ENCODE measurements at regions of chr13 and their contacts with region 1.

Region 1: GRCh38 chr13:91313103-91313502 is 34.4 kb upstream of the MIR17HG start:
- DNase-seq: no peak
- ATAC-seq: no peak
- H3K4me3 ChIP-seq: no peak overlapping the region
- H3K27ac ChIP-seq: no peak overlapping the region
- H3K4me1 ChIP-seq: no peaks in the 10 kb centered on the region
- H3K27me3 ChIP-seq: peaks cover 0 to 47% (median 20%) of the 10 kb centered on the region in 9 donors
- CTCF ChIP-seq: peak in 11 of 12 donors; percentile 19 to 52 (median 41)
- POLR2A ChIP-seq: no peak

Region 2: DNA sequence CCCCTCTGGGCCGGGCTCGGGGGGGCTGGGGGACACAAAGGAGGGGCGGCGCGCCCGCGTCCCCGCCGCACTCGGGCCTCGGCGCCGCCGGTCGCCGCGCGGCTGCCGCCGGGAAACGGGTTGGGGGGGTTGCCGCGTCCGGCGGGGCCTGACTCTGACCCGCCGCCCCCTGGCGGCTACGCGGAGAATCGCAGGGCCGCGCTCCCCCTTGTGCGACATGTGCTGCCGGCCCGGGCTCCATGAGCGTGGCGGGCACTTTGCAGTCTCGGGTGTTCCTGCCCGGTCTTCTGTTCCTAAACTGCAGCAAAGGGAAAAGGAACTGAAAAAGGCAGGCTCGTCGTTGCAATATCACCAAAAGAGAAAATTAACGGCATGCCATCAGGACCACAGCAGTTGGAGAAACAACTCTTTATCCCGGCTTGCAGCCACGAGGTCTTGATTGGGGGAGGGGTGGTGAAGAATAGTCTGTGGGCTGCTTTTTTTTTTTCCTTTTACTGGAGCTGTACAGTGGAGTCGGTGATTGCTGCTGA is 35.9 kb after region 1 on chr13:
- intact Hi-C with region 1: loop called in 1 of 10 experiments (anchors 5 kb)
- DNase-seq: peak; percentile 91 to 96 (median 94)
- ATAC-seq: peak; percentile 81 to 91 (median 88)
- H3K4me3 ChIP-seq: peak overlapping the region; percentile 10 to 100 (median 82)
- H3K27ac ChIP-seq: peak overlapping the region; percentile 85 to 97 (median 94)
- H3K4me1 ChIP-seq: peaks cover 0 to 36% (median 27%) of the 10 kb centered on the region in 12 donors
- H3K27me3 ChIP-seq: no peaks in the 10 kb centered on the region
- CTCF ChIP-seq: peak; percentile 82 to 99 (median 95)
- POLR2A ChIP-seq: no peak

Region 3: DNA sequence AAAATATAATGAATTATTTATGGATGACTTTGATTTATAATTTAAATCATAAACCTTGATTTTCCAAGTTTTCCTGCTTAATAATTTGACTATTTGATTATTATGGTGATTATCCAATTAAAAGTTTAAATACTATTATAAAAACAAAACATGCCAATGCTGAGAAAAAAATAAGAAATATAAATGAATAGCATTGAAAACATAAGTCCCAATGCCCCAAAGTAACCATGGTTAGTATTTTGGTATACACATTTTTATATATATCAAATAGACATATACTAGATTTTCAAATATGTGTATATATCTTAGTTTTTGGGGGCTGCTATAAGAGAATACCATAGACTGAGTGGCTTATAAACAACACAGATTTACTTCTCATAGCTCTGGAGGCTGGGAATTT is 193.7 kb after region 1 on chr13:
- intact Hi-C with region 1: loop called in 1 of 10 experiments (anchors 5 kb)
- DNase-seq: no peak
- ATAC-seq: no peak
- H3K4me3 ChIP-seq: no peak overlapping the region
- H3K27ac ChIP-seq: no peak overlapping the region
- H3K4me1 ChIP-seq: no peaks in the 10 kb centered on the region
- H3K27me3 ChIP-seq: no peaks in the 10 kb centered on the region
- CTCF ChIP-seq: no peak
- POLR2A ChIP-seq: no peak

Measured in heart left ventricle (tissue), 16 donors.